ENCODE measurements at regions of chr1 and their contacts with region 1.

Region 1: DNA sequence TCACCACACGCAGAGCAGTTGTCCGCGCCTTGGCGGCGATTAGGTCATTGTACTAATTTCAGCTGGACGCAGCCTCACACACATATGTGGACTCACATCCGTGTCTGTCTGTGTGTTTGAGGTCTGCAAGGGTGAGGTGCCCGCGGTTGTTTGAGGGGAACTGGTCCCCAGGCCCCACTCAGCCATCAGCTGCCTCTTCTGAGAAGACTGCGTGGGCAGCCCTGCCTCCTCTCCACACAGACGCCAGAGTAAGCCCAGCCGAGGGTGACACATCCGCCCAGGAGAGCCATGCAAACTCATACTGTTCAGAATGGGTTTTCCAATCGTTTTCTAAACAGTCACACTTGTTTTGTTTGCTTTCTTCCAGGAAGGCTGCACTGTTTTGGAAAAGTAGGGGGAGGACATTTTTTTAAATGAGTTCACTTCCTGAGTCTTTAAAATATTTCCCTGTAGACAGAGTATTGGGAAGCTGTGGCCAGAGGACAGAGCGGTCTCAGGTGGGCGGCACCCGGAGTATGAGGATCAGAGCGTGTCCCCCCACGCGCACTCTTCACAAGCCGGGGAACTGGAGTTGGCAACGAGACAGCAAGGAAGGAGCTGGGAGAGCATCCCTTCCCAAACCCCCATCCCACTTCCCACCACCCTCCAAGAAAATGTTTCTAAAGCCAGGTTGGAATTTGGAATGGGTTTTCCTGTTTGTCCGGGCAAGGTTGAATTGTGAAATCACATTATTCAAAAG is 53.3 kb downstream of the TOMM20 start:
- DNase-seq: peak; percentile 79 to 89 (median 89)
- ATAC-seq: peak; percentile 77 to 86
- H3K4me3 ChIP-seq: no peak overlapping the region
- H3K27ac ChIP-seq: peak overlapping the region; percentile 100
- H3K4me1 ChIP-seq: peaks cover 32% of the 10 kb centered on the region
- H3K27me3 ChIP-seq: no peaks in the 10 kb centered on the region

Region 2: GRCh38 chr1:234730770-234731568 is 344.4 kb before region 1 on chr1:
- intact Hi-C with region 1: loop called in 2 of 4 experiments (anchors 5 kb)
- DNase-seq: no peak
- ATAC-seq: no peak
- H3K4me3 ChIP-seq: no peak overlapping the region
- H3K27ac ChIP-seq: no peak overlapping the region
- H3K4me1 ChIP-seq: peaks cover 11% of the 10 kb centered on the region
- H3K27me3 ChIP-seq: no peaks in the 10 kb centered on the region

Region 3: GRCh38 chr1:234881893-234882771 is 193.2 kb before region 1 on chr1:
- intact Hi-C with region 1: loop called in 1 of 4 experiments (anchors 10 kb)
- DNase-seq: no peak
- ATAC-seq: no peak
- H3K4me3 ChIP-seq: no peak overlapping the region
- H3K27ac ChIP-seq: no peak overlapping the region
- H3K4me1 ChIP-seq: peaks cover 14% of the 10 kb centered on the region
- H3K27me3 ChIP-seq: no peaks in the 10 kb centered on the region

Region 4: GRCh38 chr1:234978397-234979295 is 96.7 kb before region 1 on chr1:
- intact Hi-C with region 1: loop called in 3 of 4 experiments (anchors 5 to 10 kb)
- DNase-seq: peak in 1 of 3 donors; percentile 77
- ATAC-seq: peak in 1 of 2 donors; percentile 24
- H3K4me3 ChIP-seq: no peak overlapping the region
- H3K27ac ChIP-seq: peak overlapping the region; percentile 98
- H3K4me1 ChIP-seq: peaks cover 39% of the 10 kb centered on the region
- H3K27me3 ChIP-seq: no peaks in the 10 kb centered on the region

Region 5: DNA sequence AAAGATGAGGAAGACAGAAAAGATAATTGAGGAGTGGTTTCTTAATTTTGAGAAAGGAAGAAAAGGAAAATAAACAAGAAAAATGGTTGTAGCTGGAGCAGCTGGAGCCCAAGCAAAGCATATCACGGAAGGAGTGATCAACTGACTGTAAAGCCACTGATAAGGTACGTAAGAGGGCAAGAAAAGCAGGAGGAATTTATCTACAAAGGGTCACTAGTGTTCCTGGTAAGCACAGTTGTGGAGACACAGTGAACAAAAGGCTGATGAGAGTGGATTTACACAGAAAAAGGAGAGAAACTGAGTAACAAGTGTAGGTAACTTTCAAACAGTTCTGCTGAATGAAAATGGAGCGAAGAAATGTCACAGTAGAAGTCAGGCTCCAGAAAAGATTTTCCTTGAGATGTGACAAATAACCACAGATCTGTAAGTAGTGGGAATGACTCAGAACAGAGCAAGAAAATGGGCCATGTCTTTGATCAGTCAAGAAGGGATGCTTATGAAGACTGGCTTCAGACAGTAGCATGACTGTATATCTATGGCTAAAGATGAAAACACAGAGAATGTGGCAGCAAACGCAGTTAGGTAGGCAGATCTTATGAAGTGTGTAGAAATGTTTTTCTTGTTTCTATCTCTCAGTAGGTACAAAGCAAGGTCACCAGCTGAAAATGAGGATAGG is 131.3 kb after region 1 on chr1:
- intact Hi-C with region 1: no loop called
- DNase-seq: no peak
- ATAC-seq: no peak
- H3K4me3 ChIP-seq: no peak overlapping the region
- H3K27ac ChIP-seq: no peak overlapping the region
- H3K4me1 ChIP-seq: no peaks in the 10 kb centered on the region
- H3K27me3 ChIP-seq: no peaks in the 10 kb centered on the region

Measured in right cardiac atrium (tissue), 5 donors.